ENCODE measurements at regions of chr15 and their contacts with region 1.

Region 1: DNA sequence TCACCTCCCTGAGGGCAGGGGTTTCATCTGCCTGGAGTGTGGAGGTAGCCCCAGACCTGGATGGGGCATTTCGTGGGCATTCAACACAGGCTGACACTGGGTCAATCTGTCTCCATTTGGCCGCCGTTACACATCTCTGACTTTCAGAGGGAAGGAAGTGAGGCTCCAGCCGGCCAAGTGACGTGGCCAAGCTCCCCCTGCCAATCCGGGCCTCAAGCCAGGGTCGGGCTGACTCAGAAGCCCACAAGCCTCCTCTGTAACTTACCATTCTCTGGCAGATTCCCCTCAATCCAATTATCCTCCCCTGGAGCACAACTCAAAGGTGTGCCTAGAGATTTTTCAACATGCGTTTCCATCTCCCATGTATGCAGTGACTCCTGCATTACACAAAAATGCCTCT is 227.6 kb downstream of the KLF13 start:
- DNase-seq: peak; percentile 67 to 72
- ATAC-seq: peak; percentile 60 to 92 (median 83)
- H3K4me3 ChIP-seq: no peak overlapping the region
- H3K27ac ChIP-seq: peak overlapping the region in 8 of 10 donors; percentile 38 to 77 (median 65)
- H3K4me1 ChIP-seq: peaks cover 0 to 22% (median 15%) of the 10 kb centered on the region in 9 donors
- H3K27me3 ChIP-seq: no peaks in the 10 kb centered on the region
- CTCF ChIP-seq: no peak

Region 2: GRCh38 chr15:31499953-31500765 is 54.1 kb before region 1 on chr15:
- intact Hi-C with region 1: loop called in 2 of 10 experiments (anchors 10 kb)
- DNase-seq: no peak
- ATAC-seq: peak; percentile 40 to 76 (median 58)
- H3K4me3 ChIP-seq: peak overlapping the region in 3 of 10 donors; percentile 8 to 24 (median 16)
- H3K27ac ChIP-seq: peak overlapping the region in 8 of 10 donors; percentile 15 to 59 (median 38)
- H3K4me1 ChIP-seq: peaks cover 0 to 20% (median 15%) of the 10 kb centered on the region in 9 donors
- H3K27me3 ChIP-seq: no peaks in the 10 kb centered on the region
- CTCF ChIP-seq: no peak

Region 3: GRCh38 chr15:31516874-31517273 is 37.4 kb before region 1 on chr15:
- intact Hi-C with region 1: no loop called
- DNase-seq: no peak
- ATAC-seq: no peak
- H3K4me3 ChIP-seq: no peak overlapping the region
- H3K27ac ChIP-seq: no peak overlapping the region
- H3K4me1 ChIP-seq: peaks cover 0 to 5% (median 0%) of the 10 kb centered on the region in 9 donors
- H3K27me3 ChIP-seq: no peaks in the 10 kb centered on the region
- CTCF ChIP-seq: no peak

Region 4: GRCh38 chr15:31598620-31599019 is 44.4 kb after region 1 on chr15:
- intact Hi-C with region 1: no loop called
- DNase-seq: no peak
- ATAC-seq: no peak
- H3K4me3 ChIP-seq: no peak overlapping the region
- H3K27ac ChIP-seq: no peak overlapping the region
- H3K4me1 ChIP-seq: no peaks in the 10 kb centered on the region
- H3K27me3 ChIP-seq: no peaks in the 10 kb centered on the region
- CTCF ChIP-seq: no peak